Left cardiac atrium (tissue), 4 donors: ENCODE measurements at regions of chr14 and their contacts with region 1.

Region 1: GRCh38 chr14:89040460-89041259 is 216.2 kb downstream of the TTC8 start:
- DNase-seq: peak; percentile 91
- ATAC-seq: peak; percentile 93 to 97

Region 2: GRCh38 chr14:89178802-89179535 is 138.3 kb after region 1 on chr14:
- intact Hi-C with region 1: loop called in 1 of 2 experiments (anchors 10 kb)
- DNase-seq: no peak
- ATAC-seq: no peak

Region 3: GRCh38 chr14:89416002-89416995 is 375.6 kb after region 1 on chr14:
- intact Hi-C with region 1: loop called in 1 of 2 experiments (anchors 10 kb)
- DNase-seq: peak; percentile 96
- ATAC-seq: peak; percentile 90 to 91

Region 4: GRCh38 chr14:89767861-89768268 is 727.2 kb after region 1 on chr14:
- intact Hi-C with region 1: loop called (anchors 5 to 10 kb)
- DNase-seq: no peak
- ATAC-seq: peak; percentile 72 to 80

Region 5: DNA sequence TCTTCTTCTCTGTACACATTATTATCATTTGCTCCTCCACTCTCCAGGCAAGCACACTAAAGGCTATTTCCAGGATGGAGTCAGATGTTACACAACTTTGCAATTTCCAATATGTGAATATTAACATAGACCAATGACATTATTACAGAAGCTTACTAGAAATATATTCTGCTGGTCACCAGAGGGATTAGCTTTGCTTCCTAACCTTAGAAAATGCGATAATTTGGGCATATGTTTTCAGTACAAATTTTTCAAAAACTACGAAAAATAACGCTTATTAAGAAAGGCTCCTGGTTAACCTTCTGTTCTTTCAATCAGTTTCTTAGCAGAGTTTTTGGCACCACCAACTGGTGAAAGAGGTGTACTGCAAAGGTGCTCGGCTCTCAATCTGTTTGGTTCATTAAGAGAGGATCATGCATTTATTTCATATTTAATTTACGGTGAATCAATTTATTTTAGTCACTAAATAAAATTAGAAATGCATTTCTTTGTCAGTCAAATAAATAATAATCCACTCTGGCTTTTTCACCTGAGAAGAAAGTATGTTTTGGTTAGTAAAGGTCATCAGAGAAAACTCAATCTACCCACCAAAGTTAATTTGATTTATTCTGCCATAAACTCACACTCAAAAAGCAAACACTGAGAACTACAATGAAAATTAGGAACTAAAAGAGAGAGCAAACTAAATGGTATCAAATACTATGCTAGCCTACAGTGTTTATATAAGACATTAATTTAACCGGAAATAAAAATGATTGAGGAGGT is 874.6 kb after region 1 on chr14:
- intact Hi-C with region 1: loop called in 1 of 2 experiments (anchors 5 kb)
- DNase-seq: peak; percentile 34
- ATAC-seq: peak in 1 of 2 donors; percentile 21